ENCODE measurements at regions of chr6 and their contacts with region 1.

Region 1: GRCh38 chr6:107489636-107490565 is at the start of gene SOBP:
- DNase-seq: peak; percentile 81 to 85 (median 83)
- ATAC-seq: peak in 3 of 4 donors; percentile 60 to 73 (median 61)
- H3K4me3 ChIP-seq: peak within 1 kb of the TSS; percentile 65 to 96 (median 82)
- H3K27ac ChIP-seq: peak within 1 kb of the TSS; percentile 48 to 90 (median 82)
- H3K4me1 ChIP-seq: peaks cover 0 to 50% (median 20%) of the 10 kb centered on the region in 12 donors
- H3K27me3 ChIP-seq: peaks cover 0 to 45% (median 0%) of the 10 kb centered on the region in 9 donors
- CTCF ChIP-seq: peak in 4 of 12 donors; percentile 20 to 38 (median 30)
- POLR2A ChIP-seq: no peak
- total RNA-seq, gene SOBP: 14.6 to 24.9 (median 16.5) TPM

Region 2: DNA sequence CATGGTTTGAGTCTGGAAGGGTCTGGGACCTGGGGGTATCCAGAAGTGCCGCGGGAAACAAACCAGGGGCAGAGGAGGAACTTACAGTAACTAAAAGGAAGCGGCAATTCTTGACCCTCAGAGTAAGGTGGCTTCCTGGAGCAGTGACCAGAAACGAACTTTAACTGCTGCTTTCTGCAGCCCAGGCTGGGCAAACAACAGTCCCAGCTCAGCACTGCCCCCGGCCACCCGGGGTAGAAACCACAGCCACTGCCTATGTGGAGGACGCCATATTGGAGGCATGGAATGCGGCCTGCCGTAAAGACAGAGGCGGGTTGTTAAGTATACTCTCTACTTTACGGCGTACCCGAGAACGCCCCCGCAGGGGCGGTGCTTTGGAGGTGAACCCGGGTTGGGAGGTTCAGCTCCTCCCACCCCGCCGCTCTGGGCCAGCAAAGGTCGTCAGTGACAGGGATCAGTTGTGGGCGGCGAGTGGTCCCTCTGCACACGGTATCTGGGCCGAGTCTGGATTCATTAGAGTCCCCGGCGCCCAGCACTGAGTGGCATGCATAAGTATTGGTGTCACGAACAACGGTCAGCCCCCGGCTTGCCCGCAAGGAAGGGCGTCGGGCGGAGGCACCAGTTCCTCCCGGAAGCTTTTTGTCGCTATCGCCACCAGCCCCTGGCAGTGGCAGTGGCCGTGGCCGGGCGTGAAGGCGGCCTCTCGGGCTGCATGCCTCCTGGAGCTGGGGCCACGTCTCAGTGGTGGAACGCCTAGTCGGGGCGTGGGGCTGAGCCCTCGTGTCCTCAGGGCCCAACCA is 30.4 kb before region 1 on chr6 and contains the start of gene PDSS2:
- intact Hi-C with region 1: loop called in 3 of 10 experiments (anchors 1 to 2 kb)
- DNase-seq: peak; percentile 98 to 100 (median 99)
- ATAC-seq: peak; percentile 98 to 99 (median 99)
- H3K4me3 ChIP-seq: peak within 1 kb of the TSS; percentile 64 to 96 (median 86)
- H3K27ac ChIP-seq: peak within 1 kb of the TSS; percentile 74 to 97 (median 94)
- H3K4me1 ChIP-seq: peaks cover 0 to 24% (median 10%) of the 10 kb centered on the region in 12 donors
- H3K27me3 ChIP-seq: no peaks in the 10 kb centered on the region
- CTCF ChIP-seq: peak; percentile 5 to 74 (median 42)
- POLR2A ChIP-seq: peak in 1 of 2 donors; percentile 93
- total RNA-seq, gene PDSS2: 13.2 to 24.4 (median 14.4) TPM

Region 3: GRCh38 chr6:107539409-107539808 is 49.5 kb after region 1 on chr6:
- intact Hi-C with region 1: loop called in 6 of 10 experiments (anchors 5 kb)
- DNase-seq: no peak
- ATAC-seq: no peak
- H3K4me3 ChIP-seq: no peak overlapping the region
- H3K27ac ChIP-seq: no peak overlapping the region
- H3K4me1 ChIP-seq: peaks cover 0 to 57% (median 16%) of the 10 kb centered on the region in 12 donors
- H3K27me3 ChIP-seq: peaks cover 0 to 3% (median 0%) of the 10 kb centered on the region in 9 donors
- CTCF ChIP-seq: no peak
- POLR2A ChIP-seq: no peak

Region 4: DNA sequence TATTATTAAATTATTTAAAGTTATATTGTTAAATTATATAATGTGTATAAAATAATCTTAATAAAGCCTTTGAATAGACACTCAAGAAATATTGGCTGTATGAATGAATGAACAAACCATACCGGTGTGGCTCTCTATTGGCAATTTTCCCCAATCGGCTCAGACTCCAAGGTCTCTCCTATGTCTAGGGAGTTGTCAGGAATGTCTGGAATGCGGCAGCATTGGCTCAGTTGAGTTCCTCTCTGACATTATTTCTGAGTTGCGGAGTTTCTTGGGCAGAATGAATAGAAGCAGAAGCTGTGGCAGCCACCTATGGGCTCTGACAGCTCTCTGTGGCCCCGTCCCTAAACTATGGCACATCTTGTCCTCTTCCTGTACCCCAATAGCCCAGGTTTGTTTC is 111.0 kb after region 1 on chr6:
- intact Hi-C with region 1: loop called in 2 of 10 experiments (anchors 10 kb)
- DNase-seq: peak in 3 of 5 donors; percentile 32 to 46 (median 44)
- ATAC-seq: peak in 3 of 4 donors; percentile 64 to 77 (median 73)
- H3K4me3 ChIP-seq: no peak overlapping the region
- H3K27ac ChIP-seq: no peak overlapping the region
- H3K4me1 ChIP-seq: peaks cover 0 to 61% (median 27%) of the 10 kb centered on the region in 12 donors
- H3K27me3 ChIP-seq: no peaks in the 10 kb centered on the region
- CTCF ChIP-seq: no peak
- POLR2A ChIP-seq: no peak

Region 5: DNA sequence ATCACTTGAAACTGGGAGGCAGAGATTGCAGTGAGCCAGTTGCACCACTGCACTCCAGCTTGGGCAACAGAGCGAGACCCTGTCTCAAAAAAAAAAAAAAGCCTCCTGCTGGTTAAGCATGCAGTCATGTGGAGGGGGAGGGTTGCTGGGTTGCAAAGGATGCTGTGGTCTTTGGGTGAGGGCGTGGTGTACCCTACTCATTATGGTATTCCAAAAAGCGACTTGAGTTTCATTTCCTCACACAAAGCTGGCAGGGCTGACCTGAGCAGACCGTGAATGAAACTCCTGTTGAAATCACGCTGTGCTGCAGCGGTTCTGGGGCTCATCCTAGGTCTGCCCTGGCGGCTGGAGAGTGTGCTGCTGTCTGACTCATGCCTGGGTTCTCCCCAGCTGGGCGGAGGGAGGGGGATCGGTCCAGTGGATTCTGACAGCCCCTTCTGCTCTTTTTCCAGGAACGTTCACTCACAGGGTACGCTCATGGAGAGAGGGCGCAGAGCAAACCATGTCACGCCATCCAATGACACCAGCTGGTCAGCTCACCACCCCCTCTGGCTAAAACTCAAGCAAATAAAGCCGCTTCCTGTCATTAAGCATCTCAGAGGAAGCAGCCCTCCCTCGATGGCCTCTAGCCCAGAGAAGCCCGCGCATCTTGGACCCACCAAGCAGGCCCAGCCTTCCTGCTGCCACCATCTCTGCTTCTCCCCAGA is 168.0 kb after region 1 on chr6:
- intact Hi-C with region 1: loop called in 8 of 10 experiments (anchors 5 to 10 kb)
- DNase-seq: peak in 4 of 5 donors; percentile 39 to 60 (median 52)
- ATAC-seq: peak in 3 of 4 donors; percentile 47 to 58 (median 51)
- H3K4me3 ChIP-seq: peak overlapping the region in 1 of 12 donors; percentile 8
- H3K27ac ChIP-seq: peak overlapping the region in 3 of 12 donors; percentile 37 to 62 (median 38)
- H3K4me1 ChIP-seq: peaks cover 0 to 63% (median 24%) of the 10 kb centered on the region in 12 donors
- H3K27me3 ChIP-seq: no peaks in the 10 kb centered on the region
- CTCF ChIP-seq: peak in 3 of 12 donors; percentile 3 to 19 (median 15)
- POLR2A ChIP-seq: no peak